ENCODE measurements at regions of chr1 and their contacts with region 1.

Region 1: DNA sequence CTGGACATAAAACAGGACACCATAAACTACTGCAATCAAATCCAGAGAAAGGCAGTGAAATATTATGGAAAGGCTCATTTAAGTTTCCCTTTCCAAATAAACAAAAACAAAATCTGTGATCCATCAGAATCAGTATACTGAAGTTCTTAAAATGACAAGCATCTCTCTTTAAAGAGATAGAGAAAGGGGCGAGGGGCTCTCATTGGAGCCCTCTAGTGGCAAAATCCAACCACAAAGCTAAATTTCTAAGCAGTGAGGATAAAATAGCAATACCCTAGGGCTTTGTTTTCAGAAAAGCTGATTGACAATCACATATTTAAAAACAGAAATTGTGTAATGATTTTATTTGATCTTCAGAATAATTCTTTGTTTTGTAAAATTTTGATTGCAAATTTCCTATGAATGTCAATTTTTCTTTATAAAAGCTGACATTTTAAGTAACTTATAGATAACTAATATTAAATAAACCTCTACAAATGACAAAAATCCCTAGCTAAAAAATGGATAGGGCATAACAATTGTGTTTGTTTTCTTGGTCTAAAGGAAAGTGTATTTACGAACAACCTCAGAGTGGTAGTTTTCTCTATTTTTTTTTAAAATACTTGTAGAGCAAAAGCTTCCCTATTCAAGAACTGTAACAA is 138.2 kb downstream of the COL24A1 start:
- DNase-seq: peak; percentile 68
- ATAC-seq: peak; percentile 57
- H3K4me3 ChIP-seq: no peak overlapping the region
- H3K27ac ChIP-seq: no peak overlapping the region
- H3K4me1 ChIP-seq: no peaks in the 10 kb centered on the region
- H3K27me3 ChIP-seq: peaks cover 10% of the 10 kb centered on the region
- CTCF ChIP-seq: peak; percentile 90

Region 2: DNA sequence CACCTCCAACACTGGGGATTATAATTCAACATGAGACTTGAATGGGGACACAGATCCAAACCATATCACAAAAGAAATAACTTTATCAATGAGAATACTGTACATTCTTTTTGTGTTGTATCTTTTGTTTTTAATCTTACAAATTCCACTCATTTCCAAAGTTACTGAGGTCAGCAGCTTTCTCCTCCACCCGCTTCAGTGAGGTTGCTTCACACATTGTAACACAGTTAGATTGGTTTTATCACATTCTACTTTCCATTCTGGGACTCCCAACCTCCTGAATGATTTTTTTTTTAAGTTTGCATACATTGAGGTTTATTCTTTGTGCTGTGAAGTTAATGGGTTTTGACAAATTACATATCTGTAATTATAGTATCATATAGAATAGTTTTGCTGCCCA is 597.2 kb before region 1 on chr1:
- CTCF ChIA-PET with region 1: no interaction called
- POLR2A ChIA-PET with region 1: no interaction called
- intact Hi-C with region 1: no loop called
- DNase-seq: no peak
- ATAC-seq: no peak
- H3K4me3 ChIP-seq: no peak overlapping the region
- H3K27ac ChIP-seq: no peak overlapping the region
- H3K4me1 ChIP-seq: no peaks in the 10 kb centered on the region
- H3K27me3 ChIP-seq: no peaks in the 10 kb centered on the region
- CTCF ChIP-seq: no peak

Region 3: DNA sequence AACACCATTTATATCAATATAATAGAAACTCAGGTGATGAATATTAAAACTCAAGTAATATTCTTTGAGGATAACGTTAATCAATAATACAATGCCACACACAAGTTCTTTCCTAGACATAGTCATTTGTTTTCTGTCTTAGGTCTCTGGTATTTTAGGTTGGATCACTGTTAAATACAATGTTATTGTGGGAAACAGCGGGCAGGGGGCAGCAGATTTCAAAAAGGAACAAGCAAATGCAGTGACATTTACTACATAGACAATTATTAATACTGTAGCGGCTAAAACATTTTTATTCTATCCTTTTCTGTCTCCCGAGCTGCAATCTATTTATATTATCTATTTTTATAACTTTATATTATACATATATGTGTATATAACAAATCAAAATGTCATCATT is 123.8 kb before region 1 on chr1:
- CTCF ChIA-PET with region 1: no interaction called
- POLR2A ChIA-PET with region 1: no interaction called
- intact Hi-C with region 1: loop called (anchors 1 kb)
- DNase-seq: peak; percentile 61
- ATAC-seq: peak; percentile 70
- H3K4me3 ChIP-seq: no peak overlapping the region
- H3K27ac ChIP-seq: no peak overlapping the region
- H3K4me1 ChIP-seq: no peaks in the 10 kb centered on the region
- H3K27me3 ChIP-seq: no peaks in the 10 kb centered on the region
- CTCF ChIP-seq: peak; percentile 63